ENCODE measurements at regions of chr14 and their contacts with region 1.

Region 1: DNA sequence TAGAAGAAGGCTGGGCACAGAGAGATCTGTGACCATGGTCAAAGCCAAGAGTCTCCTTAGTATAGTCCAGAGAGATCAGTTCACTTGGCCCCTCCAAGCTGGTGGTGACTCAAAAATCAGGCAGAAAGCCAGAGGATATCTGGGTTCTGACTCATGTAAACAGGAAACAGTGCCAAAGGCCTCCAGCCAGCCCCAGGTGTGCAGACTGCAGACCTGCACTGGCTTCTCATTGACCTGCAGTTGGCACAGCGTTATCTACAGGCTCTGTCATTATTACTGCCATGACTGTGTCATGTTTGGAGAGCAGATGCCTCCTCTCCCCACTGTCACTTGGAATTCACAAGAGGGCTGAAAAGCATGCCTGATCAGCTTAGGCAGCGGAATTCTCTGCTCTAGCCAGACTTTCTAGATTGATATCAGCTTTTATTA is 295.8 kb upstream of the PRKD1 start:
- DNase-seq: peak; percentile 97
- H3K4me3 ChIP-seq: no peak overlapping the region
- H3K27ac ChIP-seq: peak overlapping the region; percentile 74
- H3K4me1 ChIP-seq: peaks cover 58% of the 10 kb centered on the region
- H3K27me3 ChIP-seq: no peaks in the 10 kb centered on the region
- CTCF ChIP-seq: no peak
- POLR2A ChIP-seq: no peak

Region 2: GRCh38 chr14:29236848-29237247 is 986.6 kb before region 1 on chr14:
- CTCF ChIA-PET with region 1: no interaction called
- POLR2A ChIA-PET with region 1: no interaction called
- dilution Hi-C with region 1: no loop called
- intact Hi-C with region 1: loop called (anchors 1 kb)
- DNase-seq: peak; percentile 80
- H3K4me3 ChIP-seq: peak overlapping the region in 1 of 3 experiments; percentile 16
- H3K27ac ChIP-seq: peak overlapping the region; percentile 79
- H3K4me1 ChIP-seq: peaks cover 62% of the 10 kb centered on the region
- H3K27me3 ChIP-seq: no peaks in the 10 kb centered on the region
- CTCF ChIP-seq: no peak
- POLR2A ChIP-seq: no peak

Region 3: GRCh38 chr14:29601616-29602015 is 621.8 kb before region 1 on chr14:
- CTCF ChIA-PET with region 1: no interaction called
- POLR2A ChIA-PET with region 1: no interaction called
- dilution Hi-C with region 1: no loop called
- intact Hi-C with region 1: loop called (anchors 1 kb)
- DNase-seq: peak; percentile 61
- H3K4me3 ChIP-seq: no peak overlapping the region
- H3K27ac ChIP-seq: peak overlapping the region; percentile 44
- H3K4me1 ChIP-seq: peaks cover 14% of the 10 kb centered on the region
- H3K27me3 ChIP-seq: no peaks in the 10 kb centered on the region
- CTCF ChIP-seq: no peak
- POLR2A ChIP-seq: no peak

Region 4: DNA sequence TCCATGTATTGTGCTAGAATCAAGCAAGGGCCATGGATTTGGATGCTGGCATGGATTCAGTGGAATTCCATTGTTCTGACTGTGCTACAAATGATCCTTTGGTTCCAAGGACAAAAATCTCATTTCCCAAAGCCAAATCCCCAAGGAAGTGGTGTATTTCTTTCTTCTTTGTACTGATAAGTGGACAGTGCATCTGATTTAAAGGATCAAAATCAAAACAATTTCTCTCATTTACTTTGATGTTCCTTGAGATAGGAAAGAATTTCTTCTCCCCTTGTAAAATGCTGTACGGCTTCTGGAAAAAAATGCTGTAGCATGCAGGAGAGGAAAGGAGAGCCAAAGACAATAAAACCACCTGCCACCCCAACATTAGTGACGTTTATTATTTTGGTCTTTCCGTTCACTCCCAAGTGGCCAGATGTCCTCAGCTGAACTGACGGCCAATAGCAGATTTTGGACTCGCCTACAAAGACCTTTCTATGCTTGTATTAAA is 481.4 kb before region 1 on chr14:
- CTCF ChIA-PET with region 1: no interaction called
- POLR2A ChIA-PET with region 1: no interaction called
- dilution Hi-C with region 1: no loop called
- intact Hi-C with region 1: loop called (anchors 2 kb)
- DNase-seq: peak; percentile 84
- H3K4me3 ChIP-seq: no peak overlapping the region
- H3K27ac ChIP-seq: peak overlapping the region; percentile 59
- H3K4me1 ChIP-seq: peaks cover 23% of the 10 kb centered on the region
- H3K27me3 ChIP-seq: no peaks in the 10 kb centered on the region
- CTCF ChIP-seq: no peak
- POLR2A ChIP-seq: no peak

Region 5: GRCh38 chr14:30600922-30601918 is 377.8 kb after region 1 on chr14:
- CTCF ChIA-PET with region 1: no interaction called
- POLR2A ChIA-PET with region 1: no interaction called
- dilution Hi-C with region 1: no loop called
- intact Hi-C with region 1: no loop called
- DNase-seq: no peak
- H3K4me3 ChIP-seq: no peak overlapping the region
- H3K27ac ChIP-seq: no peak overlapping the region
- H3K4me1 ChIP-seq: no peaks in the 10 kb centered on the region
- H3K27me3 ChIP-seq: no peaks in the 10 kb centered on the region
- CTCF ChIP-seq: no peak
- POLR2A ChIP-seq: no peak

Region 6: DNA sequence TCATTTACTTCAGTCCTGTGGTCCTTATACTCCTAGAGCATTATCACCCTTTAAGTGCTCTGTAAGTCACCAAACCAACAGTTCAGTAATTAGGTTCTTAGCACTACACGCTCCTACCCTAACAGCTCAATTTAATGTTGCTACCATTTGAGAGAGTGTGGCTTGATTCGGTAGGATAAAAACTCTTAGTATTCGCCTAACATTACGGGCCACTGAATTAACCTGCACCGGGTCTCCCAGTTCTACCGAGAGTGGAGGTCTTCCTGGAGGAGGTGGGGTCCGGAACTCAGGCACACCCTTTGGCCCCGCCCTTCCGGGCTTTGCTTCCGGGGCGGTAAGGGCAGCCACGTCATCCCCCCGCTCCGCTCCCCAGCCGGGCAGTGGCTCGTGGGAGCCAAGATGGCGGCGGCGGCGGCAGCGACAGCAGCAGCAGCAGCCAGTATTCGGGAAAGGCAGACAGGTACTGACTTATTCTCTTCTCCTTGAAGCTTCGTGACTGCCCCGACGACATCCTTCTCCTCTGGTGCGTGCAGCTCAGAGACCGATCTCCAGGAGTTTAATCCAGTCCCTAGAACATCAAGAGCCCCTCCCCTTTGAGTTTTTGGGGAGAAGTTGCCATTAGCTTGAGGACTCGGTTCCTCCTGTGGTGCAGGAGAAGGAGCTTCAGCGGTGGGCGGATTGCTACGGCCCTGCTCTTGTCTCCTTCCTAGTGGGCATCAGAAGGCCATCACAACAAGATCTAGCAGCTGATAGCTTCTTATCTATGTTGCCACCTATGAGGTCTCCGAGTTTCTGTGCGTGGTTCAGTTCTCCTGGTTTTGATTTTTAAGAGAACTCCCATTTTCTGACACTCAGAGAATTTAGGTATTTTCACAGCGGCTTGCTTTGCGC is 398.8 kb after region 1 on chr14 and contains the start of gene SCFD1:
- CTCF ChIA-PET with region 1: no interaction called
- POLR2A ChIA-PET with region 1: no interaction called
- dilution Hi-C with region 1: no loop called
- intact Hi-C with region 1: loop called (anchors 10 kb)
- DNase-seq: peak; percentile 89
- H3K4me3 ChIP-seq: peak within 1 kb of the TSS; percentile 27 to 86 (median 78)
- H3K27ac ChIP-seq: peak within 1 kb of the TSS; percentile 68
- H3K4me1 ChIP-seq: peaks cover 7% of the 10 kb centered on the region
- H3K27me3 ChIP-seq: no peaks in the 10 kb centered on the region
- CTCF ChIP-seq: no peak
- POLR2A ChIP-seq: peak; percentile 96
- total RNA-seq, gene SCFD1: 50.4 and 59.9 TPM in 2 replicates